ENCODE measurements at regions of chr4 and their contacts with region 1.

Region 1: DNA sequence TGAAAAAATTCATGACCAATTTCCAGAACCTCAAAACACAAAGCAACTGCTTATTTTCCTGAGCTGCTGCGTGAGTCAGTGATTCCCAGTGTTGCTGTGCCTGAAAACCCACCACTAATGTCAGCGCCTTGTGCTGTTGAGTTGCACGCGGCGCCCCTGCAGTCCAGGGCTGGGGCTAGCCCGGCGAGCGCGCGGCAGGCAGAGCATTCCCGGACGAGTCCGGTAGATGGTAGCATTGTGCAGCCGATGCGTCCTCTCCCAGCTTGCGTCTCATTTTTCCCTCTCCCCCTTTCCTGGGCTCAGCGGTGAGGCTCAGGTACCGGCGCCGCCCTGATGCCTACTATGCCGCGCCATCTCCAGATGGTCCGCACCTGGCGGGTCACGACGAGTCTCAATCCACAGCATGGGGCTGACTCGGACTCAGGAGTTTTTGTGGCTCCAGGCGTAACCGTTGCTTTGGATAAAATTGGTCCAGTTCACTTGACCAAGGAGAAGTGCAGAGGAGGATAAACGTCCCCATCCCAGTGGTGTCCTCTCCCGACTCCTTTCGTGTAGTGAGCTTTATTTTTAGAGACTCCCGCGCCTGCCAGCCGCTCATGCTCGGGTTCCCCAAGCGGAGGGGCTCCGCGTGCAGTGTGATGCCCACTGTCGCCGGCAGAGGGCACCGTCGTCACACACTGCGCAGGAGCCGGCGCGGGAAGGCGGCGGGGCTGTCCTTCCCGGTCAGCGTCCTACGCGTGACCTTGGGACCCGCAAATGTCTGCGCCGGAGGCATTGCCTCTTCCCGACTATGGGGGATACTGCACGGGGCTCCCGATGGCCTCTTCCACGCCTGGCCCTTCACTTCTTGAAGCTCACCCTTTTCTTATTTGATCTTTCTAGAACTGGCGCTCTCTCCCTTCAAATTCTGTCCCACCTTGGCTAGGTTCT is 53.6 kb upstream of the IGFBP7 start:
- DNase-seq: peak; percentile 86
- H3K4me3 Mint-ChIP-seq: peak overlapping the region; percentile 91
- H3K27ac Mint-ChIP-seq: peak overlapping the region; percentile 82
- H3K4me1 Mint-ChIP-seq: peaks cover 15% of the 10 kb centered on the region
- H3K27me3 Mint-ChIP-seq: no peaks in the 10 kb centered on the region
- CTCF ChIP-seq: peak; percentile 88

Region 2: GRCh38 chr4:57053508-57053907 is 110.3 kb before region 1 on chr4:
- CTCF ChIA-PET with region 1: interaction called, 15 read pairs
- POLR2A ChIA-PET with region 1: no interaction called
- intact Hi-C with region 1: no loop called
- DNase-seq: peak; percentile 56
- H3K4me3 Mint-ChIP-seq: no peak overlapping the region
- H3K27ac Mint-ChIP-seq: no peak overlapping the region
- H3K4me1 Mint-ChIP-seq: peaks cover 25% of the 10 kb centered on the region
- H3K27me3 Mint-ChIP-seq: no peaks in the 10 kb centered on the region
- CTCF ChIP-seq: no peak

Region 3: DNA sequence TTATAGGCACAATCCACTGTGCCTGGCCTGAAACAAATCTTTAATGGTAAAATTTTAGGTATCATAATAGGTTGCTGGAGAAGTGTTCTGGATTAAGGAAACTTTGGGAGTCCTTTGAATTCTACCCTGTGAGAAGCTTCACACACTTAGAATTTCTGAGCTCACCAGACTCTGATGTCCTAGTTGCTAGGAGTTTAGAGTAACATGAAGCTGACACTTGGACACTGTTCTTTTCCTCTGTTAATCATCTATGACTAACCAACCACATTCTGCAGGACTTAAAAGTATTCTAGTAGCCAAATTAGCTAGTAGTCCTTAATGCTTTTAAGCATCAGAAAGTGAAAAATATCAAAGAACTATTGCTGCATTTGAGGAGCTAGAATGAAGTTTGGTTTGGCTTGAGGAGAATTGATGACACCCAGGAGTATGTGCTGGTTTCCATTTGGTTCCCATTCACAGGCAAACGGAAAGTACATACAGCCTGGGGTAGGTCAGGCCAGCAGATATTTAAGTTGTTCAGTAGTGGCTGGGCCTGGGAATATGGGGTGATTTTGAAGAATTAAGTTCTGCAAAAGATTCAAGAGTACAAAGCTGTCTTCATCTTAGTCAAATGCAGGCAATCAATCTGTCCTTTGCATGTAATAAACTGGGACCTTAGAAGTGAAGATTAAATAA is 14.8 kb before region 1 on chr4:
- CTCF ChIA-PET with region 1: interaction called, 33 read pairs
- POLR2A ChIA-PET with region 1: interaction called, 4 read pairs
- intact Hi-C with region 1: no loop called
- DNase-seq: peak; percentile 63
- H3K4me3 Mint-ChIP-seq: no peak overlapping the region
- H3K27ac Mint-ChIP-seq: no peak overlapping the region
- H3K4me1 Mint-ChIP-seq: peaks cover 24% of the 10 kb centered on the region
- H3K27me3 Mint-ChIP-seq: no peaks in the 10 kb centered on the region
- CTCF ChIP-seq: no peak

Region 4: GRCh38 chr4:57220172-57220571 is 56.4 kb after region 1 on chr4:
- CTCF ChIA-PET with region 1: interaction called, 10 read pairs
- POLR2A ChIA-PET with region 1: no interaction called
- intact Hi-C with region 1: no loop called
- DNase-seq: no peak
- H3K4me3 Mint-ChIP-seq: no peak overlapping the region
- H3K27ac Mint-ChIP-seq: no peak overlapping the region
- H3K4me1 Mint-ChIP-seq: no peaks in the 10 kb centered on the region
- H3K27me3 Mint-ChIP-seq: no peaks in the 10 kb centered on the region
- CTCF ChIP-seq: no peak

Region 5: DNA sequence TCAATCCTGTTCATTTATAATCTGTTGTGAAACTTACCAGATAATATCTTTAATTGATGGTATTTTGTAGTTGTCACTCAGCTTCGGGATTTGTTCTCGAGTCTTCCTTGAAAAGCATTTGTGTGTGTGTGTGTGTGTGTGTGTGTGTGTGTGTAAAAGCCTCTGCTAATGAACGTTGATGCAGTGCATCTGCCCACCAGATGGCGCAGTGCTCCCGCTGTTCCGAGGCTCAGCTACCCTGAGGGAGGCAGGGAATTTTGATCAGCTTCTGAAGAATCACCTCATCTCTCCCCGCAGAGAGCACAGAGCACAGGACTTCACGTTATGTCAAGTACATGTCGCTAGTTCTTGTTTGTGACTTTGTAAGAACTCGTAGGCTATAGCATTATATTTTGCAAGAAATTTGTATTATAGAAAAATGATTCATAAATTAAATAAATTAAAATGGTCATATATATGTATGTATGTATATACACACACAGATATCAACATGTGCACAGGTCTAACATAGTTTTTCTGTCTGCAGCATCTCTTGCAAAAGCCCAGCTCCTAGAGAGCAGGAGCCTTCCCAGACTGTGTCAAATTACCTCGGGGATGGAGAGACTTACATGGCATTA is 263.1 kb after region 1 on chr4:
- CTCF ChIA-PET with region 1: interaction called, 172 read pairs
- POLR2A ChIA-PET with region 1: interaction called, 6 read pairs
- intact Hi-C with region 1: loop called (anchors 1 kb)
- DNase-seq: peak; percentile 78
- H3K4me3 Mint-ChIP-seq: no peak overlapping the region
- H3K27ac Mint-ChIP-seq: no peak overlapping the region
- H3K4me1 Mint-ChIP-seq: peaks cover 20% of the 10 kb centered on the region
- H3K27me3 Mint-ChIP-seq: no peaks in the 10 kb centered on the region
- CTCF ChIP-seq: peak; percentile 61

Region 6: GRCh38 chr4:57501720-57502119 is 337.9 kb after region 1 on chr4:
- CTCF ChIA-PET with region 1: interaction called, 9 read pairs
- POLR2A ChIA-PET with region 1: no interaction called
- intact Hi-C with region 1: loop called (anchors 5 kb)
- DNase-seq: peak; percentile 98
- H3K4me3 Mint-ChIP-seq: no peak overlapping the region
- H3K27ac Mint-ChIP-seq: peak overlapping the region; percentile 55
- H3K4me1 Mint-ChIP-seq: peaks cover 11% of the 10 kb centered on the region
- H3K27me3 Mint-ChIP-seq: no peaks in the 10 kb centered on the region
- CTCF ChIP-seq: no peak

Measured in MCF 10A (cell line).